ENCODE measurements at regions of chr7 and their contacts with region 1.

Region 1: GRCh38 chr7:7424151-7424873 is 111.4 kb downstream of the COL28A1 start:
- DNase-seq: no peak
- H3K4me3 ChIP-seq: peak overlapping the region; percentile 42
- CTCF ChIP-seq: peak; percentile 87

Region 2: GRCh38 chr7:7535691-7536090 is 111.4 kb after region 1 on chr7 and contains the start of gene COL28A1:
- in situ Hi-C with region 1: loop called (anchors 10 kb)
- DNase-seq: peak; percentile 16
- H3K4me3 ChIP-seq: no peak within 1 kb of the TSS
- CTCF ChIP-seq: no peak